Activated naive CD8-positive, alpha-beta T cell treated with anti-CD3 and anti-CD28 coated beads, Interleukin-2, amount 10 ng/mL, durations not matched to agents 7 days and 5 days (primary cell): ENCODE measurements at regions of chr19 and their contacts with region 1.

Region 1: DNA sequence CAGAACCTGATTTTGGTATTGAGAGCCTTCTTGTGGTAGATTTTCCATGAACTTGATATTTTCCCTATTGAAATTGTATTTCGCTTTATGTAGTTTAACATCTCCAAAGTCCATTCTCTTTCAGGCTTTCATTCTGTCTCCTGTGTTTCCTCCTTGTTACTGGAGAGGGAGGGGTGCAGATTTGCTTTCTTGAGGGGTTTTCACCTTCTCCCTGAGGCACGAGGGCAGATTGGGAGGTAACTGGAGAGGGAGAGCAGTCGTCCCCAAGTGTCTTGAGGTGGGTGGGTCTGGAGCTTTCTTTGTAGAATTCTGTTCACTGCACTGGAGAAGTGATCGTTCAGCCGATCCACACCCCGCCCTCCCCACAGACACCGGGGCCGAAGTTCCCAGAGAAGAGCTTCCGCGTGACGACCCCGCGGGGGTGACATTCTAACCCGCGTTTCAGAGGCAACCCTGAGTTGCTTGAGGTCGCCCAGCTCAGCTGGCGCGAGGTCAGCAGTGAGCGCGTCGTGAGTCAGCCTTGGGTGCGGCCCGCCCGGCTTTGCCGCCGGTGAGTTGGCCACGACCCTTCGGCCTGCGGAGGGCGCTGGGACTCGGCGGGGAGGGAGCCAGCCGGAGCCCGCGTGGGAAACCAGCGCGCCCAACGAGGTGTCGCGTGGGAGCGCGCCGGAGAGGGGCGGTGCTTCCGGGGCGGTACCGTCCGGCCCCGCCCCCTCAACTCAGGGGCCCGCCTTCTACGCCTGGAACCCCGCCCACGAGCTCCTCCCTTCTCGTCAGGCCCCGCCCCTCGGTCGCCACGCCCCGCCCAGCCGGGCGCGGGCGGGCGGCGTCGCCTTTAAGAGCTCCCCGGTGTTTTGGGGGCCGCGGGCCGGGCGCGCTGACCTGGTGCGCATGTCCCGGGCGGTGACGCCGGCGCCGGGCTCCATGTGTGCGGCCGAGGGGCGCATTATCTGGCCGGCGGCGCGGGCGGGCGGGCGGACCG is at the start of gene GATAD2A:
- DNase-seq: peak; percentile 98
- ATAC-seq: peak; percentile 75
- H3K4me3 Mint-ChIP-seq: peak within 1 kb of the TSS; percentile 98
- H3K27ac Mint-ChIP-seq: peak within 1 kb of the TSS; percentile 95
- H3K4me1 Mint-ChIP-seq: peaks cover 53% of the 10 kb centered on the region
- H3K27me3 Mint-ChIP-seq: no peaks in the 10 kb centered on the region
- total RNA-seq, gene GATAD2A: 152 to 153 TPM

Region 2: GRCh38 chr19:19361075-19361594 is 44.0 kb before region 1 on chr19:
- POLR2A ChIA-PET with region 1: interaction called, 10 read pairs
- DNase-seq: peak; percentile 71
- ATAC-seq: peak; percentile 61
- H3K4me3 Mint-ChIP-seq: peak overlapping the region; percentile 28
- H3K27ac Mint-ChIP-seq: peak overlapping the region; percentile 9
- H3K4me1 Mint-ChIP-seq: peaks cover 16% of the 10 kb centered on the region
- H3K27me3 Mint-ChIP-seq: no peaks in the 10 kb centered on the region

Region 3: GRCh38 chr19:19385108-19385899 is 19.9 kb before region 1 on chr19:
- POLR2A ChIA-PET with region 1: interaction called, 19 read pairs
- DNase-seq: peak; percentile 99
- ATAC-seq: peak; percentile 95
- H3K4me3 Mint-ChIP-seq: peak overlapping the region; percentile 89
- H3K27ac Mint-ChIP-seq: peak overlapping the region; percentile 93
- H3K4me1 Mint-ChIP-seq: peaks cover 35% of the 10 kb centered on the region
- H3K27me3 Mint-ChIP-seq: no peaks in the 10 kb centered on the region

Region 4: GRCh38 chr19:19459707-19460251 is 54.6 kb after region 1 on chr19:
- POLR2A ChIA-PET with region 1: interaction called, 37 read pairs
- DNase-seq: peak; percentile 64
- ATAC-seq: peak; percentile 62
- H3K4me3 Mint-ChIP-seq: peak overlapping the region; percentile 81
- H3K27ac Mint-ChIP-seq: peak overlapping the region; percentile 98
- H3K4me1 Mint-ChIP-seq: peaks cover 63% of the 10 kb centered on the region
- H3K27me3 Mint-ChIP-seq: no peaks in the 10 kb centered on the region